ENCODE measurements at regions of chr1 and their contacts with region 1.

Region 1: GRCh38 chr1:110338886-110339406 is at the start of gene RBM15:
- DNase-seq: peak; percentile 92 to 100 (median 96)
- ATAC-seq: peak; percentile 74
- H3K4me3 ChIP-seq: peak within 1 kb of the TSS; percentile 91 to 97
- H3K4me3 Mint-ChIP-seq: no peak within 1 kb of the TSS
- H3K27ac ChIP-seq: peak within 1 kb of the TSS; percentile 87 to 98
- H3K27ac Mint-ChIP-seq: no peak within 1 kb of the TSS
- H3K4me1 ChIP-seq: peaks cover 49% of the 10 kb centered on the region
- H3K4me1 Mint-ChIP-seq: peaks cover 56% of the 10 kb centered on the region
- H3K27me3 ChIP-seq: no peaks in the 10 kb centered on the region
- H3K27me3 Mint-ChIP-seq: no peaks in the 10 kb centered on the region
- CTCF ChIP-seq: no peak
- total RNA-seq, gene RBM15: 57.1 to 59.3 TPM

Region 2: GRCh38 chr1:109792056-109792831 is 546.7 kb before region 1 on chr1:
- CTCF ChIA-PET with region 1: no interaction called
- POLR2A ChIA-PET with region 1: no interaction called
- intact Hi-C with region 1: no loop called
- DNase-seq: no peak
- ATAC-seq: no peak
- H3K4me3 ChIP-seq: no peak overlapping the region
- H3K4me3 Mint-ChIP-seq: no peak overlapping the region
- H3K27ac ChIP-seq: no peak overlapping the region
- H3K27ac Mint-ChIP-seq: no peak overlapping the region
- H3K4me1 ChIP-seq: peaks cover 67% of the 10 kb centered on the region
- H3K4me1 Mint-ChIP-seq: peaks cover 74% of the 10 kb centered on the region
- H3K27me3 ChIP-seq: no peaks in the 10 kb centered on the region
- H3K27me3 Mint-ChIP-seq: no peaks in the 10 kb centered on the region
- CTCF ChIP-seq: no peak

Region 3: DNA sequence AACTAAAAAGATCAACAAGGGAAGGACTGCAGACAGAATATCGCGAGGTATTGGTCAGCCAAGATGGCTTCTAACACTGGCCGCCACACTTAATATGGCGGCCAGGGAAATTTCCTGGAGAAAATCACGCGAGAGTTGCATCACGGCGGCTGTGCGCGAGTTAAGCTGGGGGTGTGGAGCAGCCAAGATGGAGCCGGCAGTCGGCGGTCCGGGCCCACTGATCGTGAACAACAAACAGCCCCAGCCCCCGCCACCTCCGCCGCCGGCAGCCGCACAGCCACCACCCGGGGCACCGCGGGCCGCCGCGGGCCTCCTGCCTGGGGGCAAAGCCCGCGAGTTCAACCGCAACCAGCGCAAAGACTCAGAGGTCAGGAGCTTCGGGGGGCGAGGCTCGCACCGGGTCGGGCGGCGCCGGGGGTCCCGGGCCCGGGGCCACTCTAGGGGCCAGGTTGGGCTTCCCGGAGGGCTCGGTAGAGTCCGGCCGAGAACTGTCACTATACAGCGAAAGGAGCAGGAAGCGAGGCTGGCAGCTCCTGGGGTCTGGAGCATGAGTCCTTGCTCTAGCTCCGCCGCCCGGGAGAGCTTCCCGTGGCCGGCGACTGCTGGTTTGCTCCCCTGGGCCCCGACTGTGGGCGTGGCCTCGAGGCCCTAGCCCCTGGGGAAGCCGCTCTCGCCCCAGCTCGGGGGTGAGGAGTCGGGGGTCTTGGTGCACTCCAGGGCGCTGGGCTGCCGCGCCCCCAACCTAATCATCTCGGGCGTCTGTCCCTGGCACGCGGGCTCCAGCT is 304.3 kb before region 1 on chr1 and contains the start of gene STRIP1:
- CTCF ChIA-PET with region 1: no interaction called
- POLR2A ChIA-PET with region 1: interaction called, 15 read pairs
- intact Hi-C with region 1: loop called (anchors 1 kb)
- DNase-seq: peak; percentile 83 to 97 (median 90)
- ATAC-seq: peak; percentile 94
- H3K4me3 ChIP-seq: peak within 1 kb of the TSS; percentile 77 to 89
- H3K4me3 Mint-ChIP-seq: peak within 1 kb of the TSS; percentile 98
- H3K27ac ChIP-seq: peak within 1 kb of the TSS; percentile 74 to 84
- H3K27ac Mint-ChIP-seq: peak within 1 kb of the TSS; percentile 96
- H3K4me1 ChIP-seq: peaks cover 36% of the 10 kb centered on the region
- H3K4me1 Mint-ChIP-seq: peaks cover 53% of the 10 kb centered on the region
- H3K27me3 ChIP-seq: no peaks in the 10 kb centered on the region
- H3K27me3 Mint-ChIP-seq: no peaks in the 10 kb centered on the region
- CTCF ChIP-seq: no peak
- total RNA-seq, gene STRIP1: 94.6 to 109 TPM

Region 4: DNA sequence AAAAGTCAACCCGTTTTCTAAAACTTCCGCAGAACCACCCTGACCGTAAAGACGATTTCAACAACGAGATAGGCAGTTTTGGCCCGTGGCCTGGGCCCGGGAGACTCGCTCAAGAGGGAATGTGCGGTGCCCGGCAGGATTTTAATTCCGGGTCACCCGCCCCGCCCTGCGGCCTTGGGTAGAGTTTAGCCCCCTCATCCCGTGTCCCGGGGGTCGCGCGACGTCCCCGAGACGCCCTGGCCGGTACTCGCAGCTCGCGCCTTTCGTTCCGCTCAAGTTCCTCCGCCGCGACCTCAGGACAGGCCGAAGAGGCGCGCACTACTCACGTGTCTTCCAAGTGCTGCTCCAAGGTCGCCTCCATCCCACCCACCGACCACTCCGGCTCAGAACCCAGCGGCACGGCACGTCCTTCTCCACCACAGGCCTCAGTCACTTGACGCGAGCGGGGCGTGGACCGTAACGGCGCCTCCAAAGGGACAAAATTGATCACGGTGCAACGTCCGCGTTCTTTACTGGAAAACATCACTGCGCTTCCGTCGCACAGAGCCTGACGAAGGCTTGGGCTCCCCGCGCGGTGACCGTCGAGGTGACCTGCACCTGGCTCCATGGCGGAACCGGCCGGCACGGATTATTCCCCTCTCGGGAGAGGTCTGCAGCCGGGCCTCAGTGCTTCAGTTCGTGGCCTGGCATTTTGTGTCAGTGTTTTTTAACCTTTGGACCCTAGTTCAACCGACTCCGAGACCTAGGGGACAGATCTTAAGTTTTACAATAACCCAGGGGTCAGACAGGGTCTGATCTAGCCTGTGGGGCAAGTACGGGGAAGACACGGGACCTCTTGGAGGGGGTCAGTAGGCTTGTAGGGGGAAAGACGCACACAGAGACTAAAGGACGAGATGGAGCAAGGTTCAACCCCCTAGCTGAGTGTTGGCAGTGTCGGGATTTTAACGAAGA is 68.6 kb after region 1 on chr1 and contains the start of gene LAMTOR5:
- CTCF ChIA-PET with region 1: interaction called, 21 read pairs
- POLR2A ChIA-PET with region 1: interaction called, 20 read pairs
- intact Hi-C with region 1: loop called (anchors 1 to 2 kb)
- DNase-seq: peak; percentile 83 to 95 (median 89)
- ATAC-seq: peak; percentile 93
- H3K4me3 ChIP-seq: peak within 1 kb of the TSS; percentile 92 to 99
- H3K4me3 Mint-ChIP-seq: peak within 1 kb of the TSS; percentile 99
- H3K27ac ChIP-seq: peak within 1 kb of the TSS; percentile 91 to 92
- H3K27ac Mint-ChIP-seq: peak within 1 kb of the TSS; percentile 99
- H3K4me1 ChIP-seq: peaks cover 23% of the 10 kb centered on the region
- H3K4me1 Mint-ChIP-seq: peaks cover 29% of the 10 kb centered on the region
- H3K27me3 ChIP-seq: no peaks in the 10 kb centered on the region
- H3K27me3 Mint-ChIP-seq: no peaks in the 10 kb centered on the region
- CTCF ChIP-seq: no peak
- total RNA-seq, gene LAMTOR5: 106 to 109 TPM

Region 5: GRCh38 chr1:110736900-110737605 is 398.1 kb after region 1 on chr1:
- CTCF ChIA-PET with region 1: no interaction called
- POLR2A ChIA-PET with region 1: no interaction called
- intact Hi-C with region 1: no loop called
- DNase-seq: no peak
- ATAC-seq: no peak
- H3K4me3 ChIP-seq: no peak overlapping the region
- H3K4me3 Mint-ChIP-seq: no peak overlapping the region
- H3K27ac ChIP-seq: no peak overlapping the region
- H3K27ac Mint-ChIP-seq: no peak overlapping the region
- H3K4me1 ChIP-seq: no peaks in the 10 kb centered on the region
- H3K4me1 Mint-ChIP-seq: no peaks in the 10 kb centered on the region
- H3K27me3 ChIP-seq: no peaks in the 10 kb centered on the region
- H3K27me3 Mint-ChIP-seq: no peaks in the 10 kb centered on the region
- CTCF ChIP-seq: no peak

Region 6: DNA sequence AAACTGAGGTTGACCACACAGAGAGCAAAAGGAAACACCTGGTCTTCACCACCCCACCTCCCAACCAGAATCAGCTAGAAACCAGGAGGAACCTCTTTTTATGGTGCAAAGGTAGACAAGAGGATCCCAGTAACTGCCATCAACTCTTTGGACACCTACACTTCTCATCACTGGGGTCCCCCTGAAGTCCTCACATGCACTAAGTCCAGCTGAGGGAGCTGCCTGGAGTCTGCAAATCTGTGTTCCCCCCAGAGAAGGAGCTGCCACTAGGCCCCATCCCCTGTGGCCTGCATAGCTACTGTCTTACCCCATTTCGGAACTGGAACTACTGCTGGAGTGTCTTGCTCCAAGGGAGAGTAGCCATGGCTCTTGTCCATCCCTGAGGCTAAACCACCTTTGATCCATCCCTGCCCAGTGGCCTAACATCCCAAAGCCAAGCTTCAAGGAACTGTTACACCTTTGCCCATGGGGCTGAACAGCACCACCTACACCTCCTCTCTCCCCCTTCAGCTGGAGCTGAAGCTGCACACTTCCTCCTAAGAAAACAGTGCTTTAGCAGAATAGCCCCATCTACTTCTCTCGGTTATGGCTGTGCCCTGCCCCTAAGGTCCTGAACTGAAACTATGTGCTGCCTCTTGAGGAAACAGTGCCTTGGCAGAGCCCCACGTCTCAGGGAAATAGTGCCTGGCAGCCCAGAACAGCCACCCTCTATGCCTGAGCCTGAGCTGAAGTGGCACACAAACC is 448.6 kb after region 1 on chr1:
- CTCF ChIA-PET with region 1: no interaction called
- POLR2A ChIA-PET with region 1: no interaction called
- intact Hi-C with region 1: loop called in 1 of 2 experiments (anchors 5 kb)
- DNase-seq: peak in 8 of 9 experiments; percentile 16 to 79 (median 50)
- ATAC-seq: peak; percentile 69
- H3K4me3 ChIP-seq: peak overlapping the region; percentile 23 to 25
- H3K4me3 Mint-ChIP-seq: peak overlapping the region; percentile 71
- H3K27ac ChIP-seq: peak overlapping the region; percentile 22 to 64
- H3K27ac Mint-ChIP-seq: peak overlapping the region; percentile 82
- H3K4me1 ChIP-seq: peaks cover 58% of the 10 kb centered on the region
- H3K4me1 Mint-ChIP-seq: peaks cover 68% of the 10 kb centered on the region
- H3K27me3 ChIP-seq: no peaks in the 10 kb centered on the region
- H3K27me3 Mint-ChIP-seq: no peaks in the 10 kb centered on the region
- CTCF ChIP-seq: no peak

Region 7: DNA sequence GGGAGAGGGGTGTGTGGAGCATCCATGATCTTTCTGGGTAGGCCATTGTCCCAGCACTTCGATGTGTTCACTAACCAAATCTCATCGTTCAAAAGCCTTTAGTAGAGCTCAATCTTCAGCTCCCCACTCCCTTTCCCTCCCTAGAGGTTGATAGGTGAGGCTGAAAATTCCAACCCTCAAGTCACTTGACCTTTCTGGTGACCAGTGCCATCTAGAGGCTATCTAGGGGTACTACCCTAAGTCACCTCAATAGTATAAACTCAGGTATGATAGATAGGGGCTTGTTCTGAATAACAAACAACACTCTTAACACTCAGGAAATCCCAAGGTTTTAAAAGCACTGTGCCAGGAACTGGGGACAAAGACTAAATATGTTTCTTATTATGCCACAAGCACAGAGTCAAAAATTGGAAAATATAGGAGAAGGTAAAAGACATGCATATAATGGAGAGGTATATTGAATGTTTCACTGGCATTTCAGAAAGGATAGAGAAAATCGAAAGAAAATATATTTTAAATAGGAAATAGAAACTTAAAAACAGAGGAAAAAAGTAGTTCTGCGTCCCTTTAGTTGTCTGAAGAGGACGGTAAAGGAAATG is 491.1 kb after region 1 on chr1:
- CTCF ChIA-PET with region 1: no interaction called
- POLR2A ChIA-PET with region 1: no interaction called
- intact Hi-C with region 1: no loop called
- DNase-seq: peak in 6 of 9 experiments; percentile 8 to 73 (median 28)
- ATAC-seq: peak; percentile 97
- H3K4me3 ChIP-seq: no peak overlapping the region
- H3K4me3 Mint-ChIP-seq: no peak overlapping the region
- H3K27ac ChIP-seq: no peak overlapping the region
- H3K27ac Mint-ChIP-seq: no peak overlapping the region
- H3K4me1 ChIP-seq: peaks cover 5% of the 10 kb centered on the region
- H3K4me1 Mint-ChIP-seq: peaks cover 15% of the 10 kb centered on the region
- H3K27me3 ChIP-seq: no peaks in the 10 kb centered on the region
- H3K27me3 Mint-ChIP-seq: no peaks in the 10 kb centered on the region
- CTCF ChIP-seq: peak; percentile 91

Region 8: DNA sequence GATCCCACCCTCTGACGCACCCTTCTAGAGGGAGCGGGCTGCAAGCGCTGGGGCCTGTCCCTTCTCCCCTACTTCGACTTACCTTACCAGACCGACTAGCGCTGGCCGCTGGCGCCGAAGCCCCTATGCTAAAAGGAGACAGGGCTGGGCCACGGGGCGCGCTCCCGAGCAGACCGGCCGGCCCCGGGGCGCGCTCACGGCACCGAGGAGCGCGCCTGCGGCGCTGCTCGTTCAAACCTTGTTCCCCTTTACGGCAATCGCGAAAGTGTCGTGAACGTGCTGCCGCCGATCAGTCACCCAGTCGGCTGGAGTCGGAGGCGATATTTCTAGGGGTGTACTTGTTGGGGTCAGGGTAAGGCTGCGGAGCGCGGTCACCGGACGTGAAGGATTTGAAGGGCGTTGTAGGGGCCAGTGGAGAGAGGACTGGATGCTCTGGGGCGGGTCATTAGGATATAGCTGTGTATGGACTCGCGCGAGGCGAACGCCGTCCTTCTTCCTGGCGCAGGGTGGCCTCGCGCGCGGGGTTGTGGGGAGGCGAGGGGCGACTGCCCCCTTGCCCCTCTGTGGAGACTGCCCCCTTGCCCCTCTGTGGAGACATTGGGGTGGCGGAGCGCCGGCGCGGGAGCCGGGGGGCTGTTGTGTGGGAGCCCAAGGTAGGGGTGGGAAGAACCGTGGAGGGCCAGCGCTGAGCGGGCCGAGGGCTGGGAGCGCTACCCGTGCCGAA is 801.2 kb after region 1 on chr1 and contains the starts of genes CEPT1 and DRAM2:
- CTCF ChIA-PET with region 1: no interaction called
- POLR2A ChIA-PET with region 1: no interaction called
- intact Hi-C with region 1: loop called in 1 of 2 experiments (anchors 10 kb)
- DNase-seq: peak; percentile 86 to 96 (median 92)
- ATAC-seq: peak; percentile 74
- H3K4me3 ChIP-seq: peak within 1 kb of the TSS; percentile 89 to 97
- H3K4me3 Mint-ChIP-seq: peak within 1 kb of the TSS; percentile 100
- H3K27ac ChIP-seq: peak within 1 kb of the TSS; percentile 85 to 88
- H3K27ac Mint-ChIP-seq: peak within 1 kb of the TSS; percentile 100
- H3K4me1 ChIP-seq: peaks cover 51% of the 10 kb centered on the region
- H3K4me1 Mint-ChIP-seq: peaks cover 57% of the 10 kb centered on the region
- H3K27me3 ChIP-seq: no peaks in the 10 kb centered on the region
- H3K27me3 Mint-ChIP-seq: no peaks in the 10 kb centered on the region
- CTCF ChIP-seq: no peak
- total RNA-seq, gene CEPT1: 21.5 to 22.9 TPM
- total RNA-seq, gene DRAM2: 25.5 to 27.1 TPM

Measured in CD8-positive, alpha-beta T cell (primary cell).